ENCODE measurements at regions of chrX and their contacts with region 1.

Region 1: GRCh38 chrX:41084044-41084892 is 977 bp upstream of the USP9X start:
- H3K4me3 ChIP-seq: peak overlapping the region; percentile 61
- H3K27ac ChIP-seq: peak overlapping the region; percentile 99
- H3K4me1 ChIP-seq: peaks cover 7% of the 10 kb centered on the region
- CTCF ChIP-seq: no peak

Region 2: GRCh38 chrX:40735325-40736169 is 348.7 kb before region 1 on chrX and contains the start of gene MED14:
- CTCF ChIA-PET with region 1: no interaction called
- POLR2A ChIA-PET with region 1: interaction called, 10 read pairs
- H3K4me3 ChIP-seq: peak within 1 kb of the TSS; percentile 98
- H3K27ac ChIP-seq: peak within 1 kb of the TSS; percentile 98
- H3K4me1 ChIP-seq: peaks cover 32% of the 10 kb centered on the region
- CTCF ChIP-seq: peak; percentile 93

Region 3: GRCh38 chrX:41096339-41096955 is 12.2 kb after region 1 on chrX:
- CTCF ChIA-PET with region 1: interaction called, 4 read pairs
- POLR2A ChIA-PET with region 1: interaction called, 36 read pairs
- H3K4me3 ChIP-seq: no peak overlapping the region
- H3K27ac ChIP-seq: no peak overlapping the region
- H3K4me1 ChIP-seq: peaks cover 49% of the 10 kb centered on the region
- CTCF ChIP-seq: no peak

Region 4: GRCh38 chrX:41110801-41111625 is 26.7 kb after region 1 on chrX:
- CTCF ChIA-PET with region 1: interaction called, 14 read pairs
- POLR2A ChIA-PET with region 1: interaction called, 21 read pairs
- H3K4me3 ChIP-seq: no peak overlapping the region
- H3K27ac ChIP-seq: peak overlapping the region; percentile 4; the same call in 1 of the 2 replicates
- H3K4me1 ChIP-seq: peaks cover 56% of the 10 kb centered on the region
- CTCF ChIP-seq: no peak

Region 5: DNA sequence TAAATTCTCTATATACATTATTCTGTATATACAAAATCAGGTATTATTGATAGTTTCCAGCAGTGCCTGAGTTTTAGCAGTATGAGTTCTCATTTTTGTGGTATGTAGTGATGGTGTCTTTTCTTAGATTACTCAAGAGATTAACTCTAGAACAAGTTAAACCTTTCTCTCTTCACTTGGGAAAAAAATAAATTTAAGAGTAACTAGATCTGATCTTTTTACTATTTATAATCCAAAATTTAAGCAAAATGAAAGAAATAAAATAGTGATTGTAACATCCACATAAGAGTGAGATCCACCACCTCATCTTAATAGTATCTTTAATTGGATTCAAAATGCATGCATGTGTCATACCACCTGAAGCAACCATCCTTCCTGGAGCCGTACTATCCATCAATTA is 125.6 kb after region 1 on chrX:
- CTCF ChIA-PET with region 1: no interaction called
- POLR2A ChIA-PET with region 1: no interaction called
- H3K4me3 ChIP-seq: no peak overlapping the region
- H3K27ac ChIP-seq: no peak overlapping the region
- H3K4me1 ChIP-seq: no peaks in the 10 kb centered on the region
- CTCF ChIP-seq: no peak